Activated CD8-positive, alpha-beta T cell treated with anti-CD3 and anti-CD28 coated beads, Interleukin-2, amount 10 ng/mL, durations not matched to agents 7 days and 5 days (primary cell): ENCODE measurements at regions of chr10 and their contacts with region 1.

Region 1: DNA sequence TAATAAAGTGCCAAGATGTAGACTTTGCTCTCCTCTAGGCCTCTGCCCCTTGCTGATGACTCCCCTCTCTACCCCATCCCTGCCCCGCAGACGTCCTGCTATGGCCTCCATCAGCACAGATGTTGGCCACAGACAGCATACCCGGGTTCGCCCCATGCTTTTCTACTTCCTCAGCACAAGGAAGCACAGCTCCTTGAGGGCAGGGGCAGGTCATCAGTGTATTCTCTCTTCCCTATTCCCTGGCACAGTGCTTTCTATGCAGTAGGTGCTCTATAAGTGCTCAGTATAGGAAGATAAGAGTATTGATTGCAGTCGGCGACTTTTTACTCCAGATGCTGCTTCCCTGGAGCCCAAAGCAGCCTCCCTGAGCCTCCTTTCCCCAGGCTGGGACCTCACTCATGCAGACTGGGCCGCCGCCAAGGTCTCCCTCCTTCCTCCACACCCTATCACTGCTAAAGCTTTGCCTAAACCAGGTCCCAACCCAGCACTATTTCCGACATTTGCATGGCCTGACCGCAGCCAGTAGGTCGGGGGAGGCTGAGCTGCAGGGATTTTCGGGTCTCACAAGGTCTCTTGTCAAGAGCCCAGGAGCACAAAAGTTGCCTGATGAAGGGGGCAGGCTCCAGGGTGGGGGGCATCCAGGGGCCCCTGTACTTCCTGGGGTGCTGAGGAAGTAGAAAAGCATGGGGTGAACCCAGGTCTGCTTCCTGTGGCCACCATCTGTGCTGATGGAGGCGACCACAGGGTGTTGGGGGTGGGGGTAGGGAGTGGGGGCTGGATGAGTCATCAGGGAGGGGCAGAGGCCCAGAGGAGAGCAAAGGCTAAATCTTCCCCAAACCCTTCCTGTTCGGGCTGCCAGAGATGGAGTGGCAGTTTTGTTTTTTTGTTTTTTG is 8.0 kb downstream of the CALHM3 start:
- DNase-seq: peak; percentile 96
- ATAC-seq: peak; percentile 84
- H3K4me3 Mint-ChIP-seq: peak overlapping the region; percentile 74
- H3K27ac Mint-ChIP-seq: peak overlapping the region; percentile 95
- H3K4me1 Mint-ChIP-seq: peaks cover 84% of the 10 kb centered on the region
- H3K27me3 Mint-ChIP-seq: no peaks in the 10 kb centered on the region

Region 2: GRCh38 chr10:103451831-103452505 is 19.0 kb before region 1 on chr10 and contains the start of gene CALHM2:
- CTCF ChIA-PET with region 1: interaction called, 54 read pairs
- POLR2A ChIA-PET with region 1: interaction called, 43 read pairs
- DNase-seq: peak; percentile 74
- ATAC-seq: peak; percentile 78
- H3K4me3 Mint-ChIP-seq: peak within 1 kb of the TSS; percentile 98
- H3K27ac Mint-ChIP-seq: peak within 1 kb of the TSS; percentile 92
- H3K4me1 Mint-ChIP-seq: peaks cover 71% of the 10 kb centered on the region
- H3K27me3 Mint-ChIP-seq: no peaks in the 10 kb centered on the region
- total RNA-seq, gene CALHM2: 131 to 135 TPM

Region 3: DNA sequence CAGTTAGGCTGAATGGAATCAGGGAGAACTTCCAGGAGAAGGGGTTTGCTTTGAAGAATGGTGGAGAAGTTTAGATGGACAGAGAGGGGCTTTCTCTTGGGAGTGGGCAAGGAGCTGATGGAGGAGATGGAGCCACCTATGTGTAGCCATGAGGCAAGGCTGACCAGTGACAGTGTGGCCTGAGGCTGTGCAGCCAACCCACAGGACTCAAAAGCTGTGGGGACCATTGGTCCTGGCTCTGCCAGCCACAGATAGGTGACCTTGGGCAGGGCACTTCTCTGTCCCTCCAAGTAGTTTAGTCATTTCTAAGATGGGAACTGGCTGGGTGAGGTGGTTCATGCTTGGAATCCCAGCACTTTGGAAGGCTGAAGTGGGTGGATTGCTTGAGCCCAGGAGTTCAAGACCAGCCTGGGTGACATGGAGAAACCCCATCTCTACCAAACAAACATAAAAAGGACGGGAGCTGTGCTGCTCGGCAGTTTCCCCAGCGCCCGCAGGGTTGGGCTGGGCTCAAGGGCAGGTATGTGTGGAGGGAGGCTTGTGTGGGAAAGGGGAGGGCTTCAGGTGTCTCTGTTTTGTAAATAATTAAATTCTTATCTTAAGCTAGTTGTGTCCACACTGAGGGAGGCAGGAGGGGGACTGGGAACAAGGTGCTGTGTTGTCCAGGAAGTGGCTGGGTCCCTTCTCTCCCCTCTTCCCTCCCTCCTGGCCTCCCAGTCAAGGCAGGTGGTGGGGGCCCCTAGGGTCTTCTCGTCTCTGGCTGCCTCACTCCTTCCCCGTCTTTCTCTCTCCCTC is 41.4 kb after region 1 on chr10:
- CTCF ChIA-PET with region 1: no interaction called
- POLR2A ChIA-PET with region 1: no interaction called
- DNase-seq: no peak
- ATAC-seq: no peak
- H3K4me3 Mint-ChIP-seq: no peak overlapping the region
- H3K27ac Mint-ChIP-seq: no peak overlapping the region
- H3K4me1 Mint-ChIP-seq: peaks cover 2% of the 10 kb centered on the region
- H3K27me3 Mint-ChIP-seq: peaks cover 14% of the 10 kb centered on the region